Ovary (tissue), 10 donors: ENCODE measurements at regions of chr5 and their contacts with region 1.

Region 1: GRCh38 chr5:112995764-112996618 is 19.4 kb downstream of the DCP2 start:
- DNase-seq: peak; percentile 68 to 87 (median 81)
- H3K4me3 ChIP-seq: no peak overlapping the region
- H3K27ac ChIP-seq: no peak overlapping the region
- H3K4me1 ChIP-seq: peaks cover 1% of the 10 kb centered on the region
- H3K27me3 ChIP-seq: no peaks in the 10 kb centered on the region
- CTCF ChIP-seq: peak; percentile 64 to 92 (median 86)
- EP300 ChIP-seq: no peak
- POLR2A ChIP-seq: no peak

Region 2: GRCh38 chr5:113250341-113250953 is 254.5 kb after region 1 on chr5:
- intact Hi-C with region 1: no loop called
- DNase-seq: peak; percentile 75 to 93 (median 84)
- H3K4me3 ChIP-seq: no peak overlapping the region
- H3K27ac ChIP-seq: peak overlapping the region in 1 of 2 donors; percentile 71
- H3K4me1 ChIP-seq: peaks cover 24% of the 10 kb centered on the region
- H3K27me3 ChIP-seq: no peaks in the 10 kb centered on the region
- CTCF ChIP-seq: no peak
- EP300 ChIP-seq: peak; percentile 70
- POLR2A ChIP-seq: no peak

Region 3: GRCh38 chr5:113330533-113331208 is 334.7 kb after region 1 on chr5:
- intact Hi-C with region 1: loop called in 2 of 4 experiments (anchors 10 kb)
- DNase-seq: no peak
- H3K4me3 ChIP-seq: no peak overlapping the region
- H3K27ac ChIP-seq: no peak overlapping the region
- H3K4me1 ChIP-seq: no peaks in the 10 kb centered on the region
- H3K27me3 ChIP-seq: no peaks in the 10 kb centered on the region
- CTCF ChIP-seq: peak in 1 of 3 donors; percentile 23
- EP300 ChIP-seq: no peak
- POLR2A ChIP-seq: no peak

Region 4: DNA sequence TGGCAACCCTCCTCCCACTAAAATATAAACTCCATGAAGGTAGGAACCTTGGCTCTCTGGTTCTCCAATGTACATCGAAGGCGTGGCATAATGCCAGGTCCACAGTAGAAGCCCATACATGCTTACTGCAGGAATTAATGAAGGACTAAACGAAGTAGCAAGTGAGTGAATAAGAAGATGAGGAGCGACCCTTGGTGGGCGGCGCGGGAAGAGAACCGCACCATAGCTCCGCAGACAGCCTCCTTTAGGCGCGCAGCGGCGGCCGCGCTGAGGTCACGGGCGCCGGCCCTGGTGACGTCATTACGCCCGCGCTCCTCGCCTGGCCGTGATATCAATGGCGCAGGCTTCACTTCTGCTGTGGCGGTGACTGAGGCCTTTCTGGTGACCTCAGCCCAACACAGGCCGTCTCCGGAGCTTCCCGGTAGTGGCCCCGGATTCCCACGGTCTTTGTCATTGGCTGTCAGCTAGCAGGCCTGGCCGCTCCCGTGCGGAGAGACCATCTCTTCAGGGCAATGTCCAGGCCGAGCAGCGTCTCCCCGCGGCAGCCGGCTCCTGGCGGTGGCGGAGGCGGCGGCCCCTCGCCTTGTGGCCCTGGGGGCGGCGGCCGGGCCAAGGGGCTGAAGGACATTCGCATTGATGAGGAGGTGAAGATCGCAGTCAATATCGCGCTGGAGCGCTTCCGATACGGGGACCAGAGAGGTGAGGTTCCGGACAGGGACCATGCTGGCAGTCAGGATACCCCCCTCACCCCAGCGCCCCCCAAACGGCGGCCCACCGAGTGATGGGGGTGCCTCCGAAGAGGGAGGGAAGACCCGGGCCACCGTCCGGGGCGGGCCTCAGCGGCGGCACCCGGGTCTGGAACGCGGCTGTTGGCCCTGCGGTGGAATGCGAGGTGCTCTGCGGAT is 517.6 kb after region 1 on chr5 and contains the start of gene YTHDC2:
- intact Hi-C with region 1: loop called in 2 of 4 experiments (anchors 10 kb)
- DNase-seq: peak; percentile 81 to 93 (median 87)
- H3K4me3 ChIP-seq: peak within 1 kb of the TSS; percentile 77
- H3K27ac ChIP-seq: peak within 1 kb of the TSS; percentile 94 to 97
- H3K4me1 ChIP-seq: no peaks in the 10 kb centered on the region
- H3K27me3 ChIP-seq: no peaks in the 10 kb centered on the region
- CTCF ChIP-seq: peak; percentile 20 to 47 (median 27)
- EP300 ChIP-seq: no peak
- POLR2A ChIP-seq: peak; percentile 66
- total RNA-seq, gene YTHDC2: 21.8 to 36.2 (median 23.7) TPM